ENCODE measurements at regions of chr13 and their contacts with region 1.

Region 1: DNA sequence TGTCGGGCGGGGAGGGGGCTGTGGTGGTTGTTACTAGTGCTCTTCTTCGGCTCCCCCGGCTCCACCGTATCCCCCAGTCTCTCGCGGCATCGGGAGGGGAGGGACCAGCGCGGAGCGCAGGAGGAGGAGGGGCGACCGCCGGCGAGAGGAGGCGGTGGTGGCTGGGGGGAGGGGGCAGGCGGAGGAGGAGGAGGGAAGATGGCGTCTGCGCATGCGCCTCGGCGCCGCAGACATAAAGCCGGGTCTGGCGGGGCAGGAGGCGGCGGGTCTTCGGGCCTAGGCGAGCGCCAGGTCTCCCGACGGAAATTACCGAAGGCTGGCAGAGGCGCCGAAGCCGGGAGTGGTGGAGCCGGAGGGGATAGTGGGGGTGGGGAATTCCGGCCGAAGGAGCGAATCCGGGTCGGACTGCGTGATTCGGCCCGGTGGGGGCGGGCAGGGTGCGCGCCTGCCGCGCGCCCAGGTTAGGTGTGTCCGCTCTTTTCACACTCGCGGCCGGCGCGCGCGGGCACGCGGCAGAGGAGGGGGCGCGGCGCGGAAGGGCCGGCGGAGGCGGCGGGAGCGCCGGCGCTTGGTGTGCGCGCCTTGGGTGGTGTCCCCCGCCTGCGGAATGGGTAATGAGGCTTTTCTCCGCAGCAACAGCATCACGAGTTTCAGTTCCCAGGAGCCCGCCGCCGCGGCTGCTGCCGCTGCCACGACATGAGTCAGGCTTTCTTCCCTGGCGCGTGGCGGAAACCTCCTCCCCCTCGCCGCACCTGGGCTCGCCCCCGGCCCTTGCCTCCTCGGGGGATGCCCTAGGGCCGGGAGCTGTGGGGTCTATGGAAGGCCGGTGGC is 1.3 kb upstream of the TSC22D1 start:
- DNase-seq: peak; percentile 97 to 98
- ATAC-seq: peak; percentile 91 to 97 (median 94)
- H3K4me3 ChIP-seq: peak overlapping the region; percentile 68 to 98 (median 94)
- H3K27ac ChIP-seq: peak overlapping the region; percentile 86 to 98 (median 97)
- H3K4me1 ChIP-seq: peaks cover 4 to 44% (median 38%) of the 10 kb centered on the region in 9 donors
- H3K27me3 ChIP-seq: no peaks in the 10 kb centered on the region
- CTCF ChIP-seq: no peak

Region 2: DNA sequence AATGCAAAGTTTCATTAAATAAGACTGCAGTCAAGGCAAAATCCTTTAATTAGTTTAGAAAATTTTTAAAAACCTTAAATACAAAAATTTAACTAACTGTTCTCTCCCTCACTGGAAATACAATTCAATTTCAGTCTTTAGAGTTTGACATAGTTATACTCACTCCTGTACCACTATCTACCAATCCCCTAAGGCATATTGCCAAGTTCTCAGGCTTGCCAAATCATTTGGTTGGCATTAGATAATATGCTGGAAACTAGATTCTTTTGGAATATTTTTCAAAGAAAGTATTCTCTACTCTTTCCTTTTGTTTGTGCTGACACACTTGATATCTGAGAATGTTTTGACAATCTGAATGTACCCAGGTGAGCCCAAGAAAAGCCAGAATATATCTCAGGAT is 78.5 kb before region 1 on chr13:
- intact Hi-C with region 1: loop called in 1 of 10 experiments (anchors 5 kb)
- DNase-seq: no peak
- ATAC-seq: no peak
- H3K4me3 ChIP-seq: no peak overlapping the region
- H3K27ac ChIP-seq: no peak overlapping the region
- H3K4me1 ChIP-seq: peaks cover 0 to 16% (median 4%) of the 10 kb centered on the region in 9 donors
- H3K27me3 ChIP-seq: no peaks in the 10 kb centered on the region
- CTCF ChIP-seq: no peak

Region 3: DNA sequence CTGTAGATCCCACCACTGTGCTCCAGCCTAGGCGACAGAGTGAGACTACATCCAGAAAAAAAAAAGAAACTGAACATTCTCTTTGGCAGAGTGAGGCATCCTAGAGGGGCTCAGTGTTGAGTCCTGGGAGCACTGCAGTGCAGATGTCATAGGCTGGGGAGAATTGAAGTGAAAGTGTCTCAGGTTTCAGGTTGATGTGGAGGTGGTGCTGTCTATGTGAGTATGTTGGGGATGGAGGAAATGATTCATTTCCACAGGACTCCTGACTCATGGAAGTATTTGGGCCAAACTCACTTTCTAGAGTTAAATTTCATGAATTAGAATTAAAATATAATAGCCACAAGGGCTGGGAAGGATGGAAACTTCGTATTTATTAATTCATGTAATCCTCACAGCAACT is 133.1 kb after region 1 on chr13:
- intact Hi-C with region 1: loop called in 1 of 10 experiments (anchors 5 kb)
- DNase-seq: no peak
- ATAC-seq: peak in 3 of 8 donors; percentile 44 to 72 (median 57)
- H3K4me3 ChIP-seq: no peak overlapping the region
- H3K27ac ChIP-seq: peak overlapping the region in 1 of 10 donors; percentile 24
- H3K4me1 ChIP-seq: peaks cover 0 to 24% (median 14%) of the 10 kb centered on the region in 9 donors
- H3K27me3 ChIP-seq: no peaks in the 10 kb centered on the region
- CTCF ChIP-seq: no peak

Region 4: GRCh38 chr13:44854313-44855060 is 277.0 kb after region 1 on chr13:
- intact Hi-C with region 1: loop called in 2 of 10 experiments (anchors 5 kb)
- DNase-seq: peak; percentile 61 to 70
- ATAC-seq: peak; percentile 90 to 98 (median 95)
- H3K4me3 ChIP-seq: no peak overlapping the region
- H3K27ac ChIP-seq: peak overlapping the region; percentile 31 to 82 (median 73)
- H3K4me1 ChIP-seq: peaks cover 0 to 37% (median 15%) of the 10 kb centered on the region in 9 donors
- H3K27me3 ChIP-seq: no peaks in the 10 kb centered on the region
- CTCF ChIP-seq: no peak

Region 5: DNA sequence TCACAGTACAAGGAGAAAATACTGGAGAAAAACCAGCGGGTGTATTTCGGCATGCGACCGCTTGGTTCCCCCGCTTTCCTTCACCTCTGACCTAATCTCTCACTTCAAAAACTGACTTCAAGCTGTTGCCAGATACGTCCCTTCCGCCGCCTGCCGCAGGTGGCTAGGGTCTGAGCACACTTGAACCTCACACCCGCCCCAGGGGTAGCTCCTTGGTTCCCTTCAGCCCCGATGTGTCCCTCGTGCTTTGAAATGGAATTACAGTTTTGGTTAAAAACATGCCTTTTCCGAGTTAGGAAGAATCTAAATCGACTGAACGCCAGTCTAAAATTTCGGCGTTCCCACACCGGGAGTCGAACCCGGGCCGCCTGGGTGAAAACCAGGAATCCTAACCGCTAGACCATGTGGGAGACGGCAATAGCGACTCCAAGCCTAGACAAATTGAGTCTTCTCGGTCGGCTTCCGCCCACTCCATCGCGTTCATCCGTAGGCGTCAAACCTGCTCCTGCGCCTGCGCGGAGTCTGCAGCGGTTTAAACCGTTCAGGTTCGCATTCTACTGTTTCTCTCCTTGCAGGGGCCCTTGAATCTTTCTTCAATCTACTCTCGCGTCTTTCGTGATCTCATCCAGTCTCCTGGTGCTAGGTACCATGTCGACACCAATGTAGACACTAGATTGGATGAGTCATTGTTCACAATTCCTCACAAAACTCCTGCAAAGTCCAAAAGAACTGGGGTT is 340.3 kb after region 1 on chr13:
- intact Hi-C with region 1: loop called in 4 of 10 experiments (anchors 1 to 10 kb)
- DNase-seq: peak; percentile 96 to 97
- ATAC-seq: peak; percentile 87 to 96 (median 94)
- H3K4me3 ChIP-seq: peak overlapping the region; percentile 36 to 68 (median 54)
- H3K27ac ChIP-seq: peak overlapping the region; percentile 84 to 96 (median 91)
- H3K4me1 ChIP-seq: peaks cover 7 to 37% (median 26%) of the 10 kb centered on the region in 9 donors
- H3K27me3 ChIP-seq: no peaks in the 10 kb centered on the region
- CTCF ChIP-seq: peak in 6 of 9 donors; percentile 26 to 58 (median 42)

Measured in heart right ventricle (tissue), 16 donors.